ENCODE measurements at regions of chr11 and their contacts with region 1.

Region 1: GRCh38 chr11:47213985-47214564 is 699 bp upstream of the DDB2 start:
- DNase-seq: peak; percentile 98
- H3K4me3 ChIP-seq: peak overlapping the region; percentile 56 to 70 (median 58)
- H3K27ac ChIP-seq: peak overlapping the region; percentile 93 to 97 (median 94)
- H3K4me1 ChIP-seq: peaks cover 0 to 44% (median 28%) of the 10 kb centered on the region in 4 donors
- H3K27me3 ChIP-seq: no peaks in the 10 kb centered on the region
- CTCF ChIP-seq: no peak
- EP300 ChIP-seq: peak in 1 of 4 donors; percentile 24
- POLR2A ChIP-seq: peak; percentile 89 to 91

Region 2: DNA sequence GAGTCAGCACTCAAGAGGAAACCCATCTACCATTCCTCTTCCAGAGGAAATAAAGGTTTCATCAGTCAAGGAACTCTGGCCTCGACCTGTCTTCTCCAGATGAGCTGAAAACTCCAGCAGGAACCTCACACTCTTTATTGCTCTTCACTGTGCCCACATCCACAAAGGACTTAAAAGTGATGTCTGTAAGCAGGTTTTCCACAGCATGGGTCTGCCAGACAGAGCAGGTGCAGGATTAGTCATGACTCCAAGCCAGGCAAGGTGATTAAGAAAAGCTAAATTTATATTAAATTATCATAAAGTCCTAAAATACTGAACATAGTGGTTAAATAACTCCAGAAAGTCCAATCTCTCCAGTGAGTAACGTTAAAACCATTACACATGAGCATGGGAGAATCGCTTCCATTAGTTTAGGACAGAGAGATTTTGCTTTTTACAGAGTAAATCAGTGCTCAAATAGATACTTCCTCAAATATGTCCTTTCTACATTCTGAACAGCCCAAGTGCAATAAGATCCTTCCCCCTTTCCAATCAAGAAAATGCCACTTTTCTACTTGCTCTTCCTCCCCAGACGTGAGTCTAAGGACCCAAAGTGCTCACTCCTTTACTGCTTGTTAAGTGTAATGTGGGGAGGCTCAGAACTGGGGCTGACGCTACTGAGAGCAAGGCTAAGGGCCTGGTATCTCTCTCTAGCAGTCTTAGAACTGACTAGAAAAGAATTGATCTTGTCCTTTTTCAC is 357.3 kb before region 1 on chr11:
- intact Hi-C with region 1: no loop called
- DNase-seq: no peak
- H3K4me3 ChIP-seq: no peak overlapping the region
- H3K27ac ChIP-seq: no peak overlapping the region
- H3K4me1 ChIP-seq: peaks cover 0 to 17% (median 4%) of the 10 kb centered on the region in 4 donors
- H3K27me3 ChIP-seq: no peaks in the 10 kb centered on the region
- CTCF ChIP-seq: no peak
- EP300 ChIP-seq: no peak
- POLR2A ChIP-seq: no peak

Region 3: GRCh38 chr11:47176328-47177228 is 37.5 kb before region 1 on chr11 and contains the start of gene ARFGAP2:
- intact Hi-C with region 1: loop called (anchors 2 kb)
- DNase-seq: peak; percentile 98
- H3K4me3 ChIP-seq: peak within 1 kb of the TSS; percentile 77 to 97 (median 94)
- H3K27ac ChIP-seq: peak within 1 kb of the TSS; percentile 92 to 99 (median 98)
- H3K4me1 ChIP-seq: peaks cover 0 to 66% (median 50%) of the 10 kb centered on the region in 4 donors
- H3K27me3 ChIP-seq: no peaks in the 10 kb centered on the region
- CTCF ChIP-seq: no peak
- EP300 ChIP-seq: peak in 2 of 4 donors; percentile 17 to 24
- POLR2A ChIP-seq: peak; percentile 16 to 32
- total RNA-seq, gene ARFGAP2: 85.0 to 185 (median 123) TPM

Region 4: GRCh38 chr11:47186076-47186936 is 27.8 kb before region 1 on chr11 and contains the start of gene PACSIN3:
- intact Hi-C with region 1: loop called (anchors 1 kb)
- DNase-seq: peak; percentile 82
- H3K4me3 ChIP-seq: peak within 1 kb of the TSS; percentile 62 to 95 (median 75)
- H3K27ac ChIP-seq: peak within 1 kb of the TSS; percentile 88 to 99 (median 95)
- H3K4me1 ChIP-seq: peaks cover 0 to 72% (median 65%) of the 10 kb centered on the region in 4 donors
- H3K27me3 ChIP-seq: no peaks in the 10 kb centered on the region
- CTCF ChIP-seq: peak in 2 of 4 experiments; percentile 33 to 38
- EP300 ChIP-seq: no peak
- POLR2A ChIP-seq: peak in 1 of 2 donors; percentile 20
- total RNA-seq, gene PACSIN3: 56.0 to 78.3 (median 73.5) TPM

Region 5: GRCh38 chr11:47233989-47234668 is 20.1 kb after region 1 on chr11:
- intact Hi-C with region 1: no loop called
- DNase-seq: no peak
- H3K4me3 ChIP-seq: peak overlapping the region in 2 of 4 donors; percentile 3 to 12
- H3K27ac ChIP-seq: peak overlapping the region; percentile 18 to 67 (median 58)
- H3K4me1 ChIP-seq: peaks cover 0 to 17% (median 12%) of the 10 kb centered on the region in 4 donors
- H3K27me3 ChIP-seq: no peaks in the 10 kb centered on the region
- CTCF ChIP-seq: peak in 1 of 4 experiments; percentile 22
- EP300 ChIP-seq: no peak
- POLR2A ChIP-seq: no peak

Region 6: GRCh38 chr11:47269002-47269828 is 55.1 kb after region 1 on chr11:
- intact Hi-C with region 1: loop called (anchors 2 kb)
- DNase-seq: peak; percentile 97
- H3K4me3 ChIP-seq: peak overlapping the region; percentile 77 to 94 (median 92)
- H3K27ac ChIP-seq: peak overlapping the region; percentile 95 to 98 (median 96)
- H3K4me1 ChIP-seq: peaks cover 0 to 40% (median 38%) of the 10 kb centered on the region in 4 donors
- H3K27me3 ChIP-seq: no peaks in the 10 kb centered on the region
- CTCF ChIP-seq: peak in 1 of 4 experiments; percentile 12
- EP300 ChIP-seq: no peak
- POLR2A ChIP-seq: peak in 1 of 2 donors; percentile 41